Prostate gland (tissue), 2 donors: ENCODE measurements at regions of chr10 and their contacts with region 1.

Region 1: DNA sequence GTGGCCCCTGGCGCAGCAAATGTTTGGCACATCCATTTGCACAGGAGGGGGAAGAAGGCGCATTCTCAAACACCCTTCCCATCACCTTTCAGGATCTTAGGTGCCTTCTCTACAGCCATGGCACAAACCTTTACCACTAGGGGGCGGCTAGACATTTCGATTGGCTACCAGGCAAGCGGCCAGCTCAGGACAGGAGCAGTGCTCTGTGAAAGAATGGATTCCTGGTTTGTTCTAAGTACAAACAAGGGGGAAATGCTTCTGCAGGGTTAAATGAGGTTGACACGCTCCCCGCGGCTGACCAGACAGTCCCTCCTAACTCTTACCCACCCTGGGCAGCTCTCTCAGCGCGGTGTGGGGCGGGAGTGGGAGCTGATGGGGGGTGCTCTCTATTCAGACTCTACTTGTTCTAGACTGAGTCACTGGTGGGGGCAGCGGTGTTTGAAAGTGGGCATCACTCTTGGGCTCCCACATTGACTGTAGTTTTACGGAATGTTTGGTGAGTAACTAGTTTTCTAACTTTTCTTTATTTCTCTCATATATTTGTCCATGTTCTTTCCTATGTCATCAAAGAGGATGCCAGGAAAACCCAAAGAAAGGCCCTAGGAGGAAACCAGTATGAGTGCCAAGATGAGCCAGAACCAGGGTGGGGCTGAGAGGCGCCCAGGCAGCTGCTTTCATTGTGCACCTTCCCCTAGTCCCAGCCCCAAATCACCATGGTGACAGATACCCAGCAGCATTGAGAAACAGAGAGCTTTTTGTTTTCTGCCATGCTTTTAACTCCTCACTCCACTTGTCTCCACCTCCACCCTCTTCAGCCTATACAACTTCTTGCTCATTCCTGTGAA is 61.4 kb upstream of the GPR158 start:
- DNase-seq: peak; percentile 71
- H3K4me3 ChIP-seq: no peak overlapping the region
- H3K27ac ChIP-seq: no peak overlapping the region
- H3K4me1 ChIP-seq: no peaks in the 10 kb centered on the region
- H3K27me3 ChIP-seq: no peaks in the 10 kb centered on the region
- CTCF ChIP-seq: peak in 3 of 4 experiments; percentile 59 to 77 (median 59)
- POLR2A ChIP-seq: no peak

Region 2: DNA sequence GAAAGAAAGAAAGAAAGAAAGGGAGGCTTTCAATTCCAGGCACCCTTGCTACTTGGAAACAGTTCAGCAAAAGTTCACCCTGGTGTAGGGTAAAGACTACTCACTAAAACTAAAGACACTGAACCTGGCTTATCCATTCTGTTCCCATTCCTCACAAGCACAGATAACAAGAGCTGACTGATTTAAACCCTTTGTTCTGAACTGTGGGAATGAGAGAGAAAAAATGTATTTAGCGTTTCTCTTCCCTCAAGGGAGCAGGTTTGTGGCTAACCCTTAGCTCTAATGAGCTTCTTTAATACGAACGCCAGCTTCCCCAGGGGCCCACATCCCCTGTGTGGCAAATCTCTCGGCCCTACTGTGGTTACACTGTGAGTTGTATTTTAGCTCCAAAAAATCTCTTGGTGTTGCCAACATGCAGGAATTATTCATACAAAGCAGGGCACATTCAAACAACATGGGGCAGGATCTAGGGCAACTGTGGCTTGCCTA is 184.3 kb before region 1 on chr10:
- intact Hi-C with region 1: no loop called
- DNase-seq: no peak
- H3K4me3 ChIP-seq: no peak overlapping the region
- H3K27ac ChIP-seq: no peak overlapping the region
- H3K4me1 ChIP-seq: no peaks in the 10 kb centered on the region
- H3K27me3 ChIP-seq: no peaks in the 10 kb centered on the region
- CTCF ChIP-seq: no peak
- POLR2A ChIP-seq: no peak

Region 3: GRCh38 chr10:25682203-25682851 is 568.9 kb after region 1 on chr10:
- intact Hi-C with region 1: loop called (anchors 1 kb)
- DNase-seq: no peak
- H3K4me3 ChIP-seq: no peak overlapping the region
- H3K27ac ChIP-seq: peak overlapping the region in 1 of 2 donors; percentile 27
- H3K4me1 ChIP-seq: no peaks in the 10 kb centered on the region
- H3K27me3 ChIP-seq: no peaks in the 10 kb centered on the region
- CTCF ChIP-seq: peak in 1 of 4 experiments; percentile 34
- POLR2A ChIP-seq: no peak